Heart left ventricle (tissue), 16 donors: ENCODE measurements at regions of chr19 and their contacts with region 1.

Region 1: DNA sequence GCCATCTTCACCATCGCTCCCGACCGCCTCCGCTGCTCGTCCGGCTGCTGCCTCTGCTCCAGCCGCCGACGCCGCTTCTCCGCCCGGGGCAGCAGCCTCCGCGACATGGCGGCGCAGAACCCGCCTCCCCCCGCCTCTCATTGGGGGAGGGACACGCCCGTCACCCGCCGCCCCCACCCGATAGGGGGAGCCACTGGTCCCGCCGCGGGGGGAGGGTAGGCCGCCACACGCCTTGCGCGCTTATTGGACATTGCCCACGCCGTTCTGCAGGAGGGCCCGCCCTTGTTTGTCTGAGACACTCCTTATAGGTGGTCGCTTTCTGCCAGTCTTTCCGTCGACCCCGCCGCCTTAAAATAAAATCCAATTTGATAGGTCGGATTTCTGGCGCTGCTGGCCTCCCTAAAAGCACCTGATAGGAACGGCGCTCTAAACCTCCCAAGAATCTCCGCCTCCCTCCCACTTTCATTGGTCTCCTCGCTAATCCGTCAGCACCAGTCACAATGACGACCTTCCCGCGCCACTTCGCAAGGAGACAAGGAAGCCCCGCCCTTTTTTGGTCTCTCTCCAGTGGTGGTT is at the start of gene HNRNPL:
- DNase-seq: peak; percentile 99 to 100 (median 100)
- ATAC-seq: peak; percentile 79 to 85 (median 81)
- H3K4me3 ChIP-seq: peak within 1 kb of the TSS; percentile 83 to 100 (median 95)
- H3K27ac ChIP-seq: peak within 1 kb of the TSS; percentile 99 to 100 (median 100)
- H3K4me1 ChIP-seq: peaks cover 9 to 59% (median 46%) of the 10 kb centered on the region in 12 donors
- H3K27me3 ChIP-seq: no peaks in the 10 kb centered on the region
- CTCF ChIP-seq: peak; percentile 21 to 81 (median 56)
- POLR2A ChIP-seq: peak; percentile 40 to 90
- total RNA-seq, gene HNRNPL: 93.6 to 256 (median 165) TPM

Region 2: DNA sequence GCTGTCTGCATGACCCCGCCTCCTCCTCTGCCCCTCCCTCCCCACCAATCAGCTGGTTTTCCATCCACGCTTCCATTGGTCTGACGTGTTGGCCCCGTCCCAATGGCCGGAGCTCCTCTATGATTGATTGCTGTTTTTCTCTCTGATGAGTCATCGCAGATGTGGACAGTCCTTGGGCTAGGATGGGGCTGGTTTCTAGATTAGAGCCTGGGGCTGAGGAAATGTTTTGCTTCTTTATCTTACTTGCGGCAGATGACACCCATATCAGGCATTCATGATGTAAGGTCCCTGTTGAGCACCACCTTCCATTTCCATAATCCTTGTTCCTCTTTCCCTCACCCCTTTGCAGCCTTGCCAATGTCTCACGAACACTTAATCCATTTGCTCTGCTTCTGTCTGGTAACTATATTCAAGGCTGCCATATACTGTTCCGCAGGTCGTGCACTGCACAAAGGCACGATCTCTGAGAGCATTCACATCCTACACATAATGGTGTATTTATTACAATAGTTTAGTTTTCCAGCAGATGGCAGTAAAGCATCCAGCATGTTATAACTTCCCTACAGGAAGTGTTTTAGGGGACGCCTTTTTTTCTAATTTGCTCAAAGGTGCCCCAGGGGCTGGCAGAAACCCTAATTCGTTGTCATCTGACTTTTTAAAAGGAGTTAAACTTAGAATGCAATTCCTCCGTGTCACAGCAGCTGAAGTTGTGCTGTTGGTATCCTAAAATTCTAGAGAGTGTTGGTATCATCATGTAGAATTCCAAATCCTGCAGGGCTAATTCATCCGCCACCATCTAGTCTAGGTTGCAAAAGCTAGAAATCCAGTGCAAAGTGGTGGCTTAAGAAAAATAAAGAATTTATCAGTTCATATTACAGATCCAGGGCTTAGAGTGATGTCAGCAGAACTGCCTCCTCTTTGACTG is 305.7 kb before region 1 on chr19:
- intact Hi-C with region 1: loop called in 1 of 10 experiments (anchors 5 kb)
- DNase-seq: peak in 4 of 5 donors; percentile 44 to 67 (median 55)
- ATAC-seq: peak; percentile 64 to 84 (median 83)
- H3K4me3 ChIP-seq: peak overlapping the region in 4 of 12 donors; percentile 9 to 44 (median 26)
- H3K27ac ChIP-seq: peak overlapping the region in 1 of 12 donors; percentile 14
- H3K4me1 ChIP-seq: peaks cover 0 to 14% (median 5%) of the 10 kb centered on the region in 12 donors
- H3K27me3 ChIP-seq: no peaks in the 10 kb centered on the region
- CTCF ChIP-seq: peak; percentile 43 to 69 (median 59)
- POLR2A ChIP-seq: no peak

Region 3: GRCh38 chr19:38899447-38900219 is 49.7 kb after region 1 on chr19 and contains the starts of genes NFKBIB and SIRT2:
- intact Hi-C with region 1: loop called in 5 of 10 experiments (anchors 1 to 5 kb)
- DNase-seq: peak; percentile 99 to 100 (median 100)
- ATAC-seq: peak; percentile 97 to 99 (median 98)
- H3K4me3 ChIP-seq: peak within 1 kb of the TSS; percentile 74 to 98 (median 92)
- H3K27ac ChIP-seq: peak within 1 kb of the TSS; percentile 38 to 95 (median 91)
- H3K4me1 ChIP-seq: peaks cover 6 to 46% (median 22%) of the 10 kb centered on the region in 12 donors
- H3K27me3 ChIP-seq: no peaks in the 10 kb centered on the region
- CTCF ChIP-seq: peak in 1 of 12 donors; percentile 13
- POLR2A ChIP-seq: peak; percentile 75 to 95
- total RNA-seq, gene NFKBIB: 17.2 to 38.6 (median 22.2) TPM
- total RNA-seq, gene SIRT2: 58.3 to 158 (median 62.4) TPM

Region 4: DNA sequence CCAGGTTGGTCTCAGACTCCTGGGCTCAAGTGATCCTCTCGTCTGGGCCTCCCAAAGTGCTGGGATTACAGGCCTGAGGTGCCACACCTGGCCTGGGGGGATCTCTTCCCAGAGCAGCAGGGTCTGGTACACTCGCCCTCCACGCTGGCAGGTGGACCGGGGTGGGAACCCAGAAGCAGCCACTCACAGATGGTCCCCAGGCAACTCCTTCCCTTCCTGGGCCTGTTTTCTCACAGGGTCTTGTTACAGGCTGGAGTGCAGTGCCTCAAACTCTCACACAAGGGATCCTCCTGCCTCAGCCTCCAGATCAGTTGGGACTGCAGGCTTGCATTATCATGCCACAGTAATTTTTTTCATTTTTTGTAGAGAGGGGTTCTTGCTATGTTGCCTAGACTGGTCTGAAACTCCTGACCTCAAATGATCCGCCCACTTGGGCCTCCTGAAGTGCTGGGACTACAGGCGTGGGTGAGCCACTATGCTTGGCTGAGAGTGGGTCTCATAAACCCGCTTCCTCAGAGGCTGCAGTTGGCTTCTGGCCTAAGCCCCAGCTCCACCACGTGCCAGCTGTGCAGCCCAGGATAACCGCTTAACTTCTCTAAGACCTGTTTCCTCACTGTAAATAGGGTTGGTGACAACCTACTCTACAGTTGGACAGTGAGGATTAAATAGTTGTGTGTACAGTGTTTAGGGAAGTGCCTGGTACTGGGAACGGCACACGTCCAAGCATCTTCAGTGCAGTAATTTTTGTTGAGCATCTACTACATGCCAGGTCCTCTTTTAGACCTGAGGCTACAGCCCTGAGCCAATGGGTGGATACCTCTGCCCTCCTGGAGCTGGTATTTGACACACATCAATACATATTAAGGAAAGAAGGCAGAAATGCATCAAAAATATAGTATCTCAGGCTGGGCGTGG is 62.9 kb after region 1 on chr19:
- intact Hi-C with region 1: no loop called
- DNase-seq: peak in 1 of 5 donors; percentile 51
- ATAC-seq: no peak
- H3K4me3 ChIP-seq: no peak overlapping the region
- H3K27ac ChIP-seq: no peak overlapping the region
- H3K4me1 ChIP-seq: no peaks in the 10 kb centered on the region
- H3K27me3 ChIP-seq: peaks cover 0 to 16% (median 0%) of the 10 kb centered on the region in 9 donors
- CTCF ChIP-seq: no peak
- POLR2A ChIP-seq: no peak